ENCODE measurements at regions of chr12 and their contacts with region 1.

Region 1: DNA sequence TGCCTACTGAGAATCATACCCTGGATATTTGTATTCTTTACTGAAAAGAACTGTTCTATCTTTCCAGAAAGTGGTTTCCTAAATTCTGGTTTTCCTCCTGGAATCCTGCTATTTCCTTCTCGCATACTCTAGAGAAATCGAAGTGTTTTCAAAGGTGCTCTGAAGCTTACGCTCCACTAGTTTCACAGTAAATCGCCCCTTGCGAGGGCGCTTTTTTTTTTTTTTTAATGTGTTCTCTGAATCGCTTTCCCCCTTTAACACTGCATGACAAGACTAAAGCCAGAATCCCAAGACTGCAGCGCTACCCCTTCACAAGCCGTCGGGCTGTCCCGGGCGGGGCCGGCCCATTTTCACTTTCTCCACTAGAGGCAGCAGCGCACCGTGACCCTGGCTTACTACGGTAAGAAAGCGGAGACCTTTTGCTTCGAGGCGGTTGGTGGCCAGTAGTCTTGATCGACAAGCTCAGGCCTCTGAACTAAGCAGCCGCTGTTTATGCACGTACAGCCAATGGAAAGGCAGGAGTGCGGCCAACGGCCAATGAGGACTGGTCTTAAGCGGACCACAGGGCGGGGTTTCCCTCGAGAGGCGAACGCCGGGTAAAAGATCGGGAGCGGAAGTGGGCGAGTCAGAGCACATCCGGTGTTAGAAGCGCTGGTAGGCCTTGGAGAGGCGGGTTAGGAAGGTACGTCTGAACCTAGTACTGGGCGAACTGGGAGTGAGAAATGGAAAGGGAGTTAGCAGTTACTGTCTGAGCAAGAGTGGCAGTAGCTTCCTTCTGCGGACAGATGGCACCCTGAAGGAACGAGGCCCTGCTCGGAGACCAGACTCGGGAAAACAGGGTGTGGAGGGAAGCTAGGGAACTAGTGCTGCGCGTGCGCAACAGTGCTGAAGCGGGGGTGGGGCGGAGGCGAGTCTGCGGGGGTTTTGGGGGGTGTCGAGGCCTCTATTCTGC is at the start of gene TMBIM6:
- DNase-seq: peak; percentile 99
- H3K4me3 Mint-ChIP-seq: peak within 1 kb of the TSS; percentile 96
- H3K27ac Mint-ChIP-seq: peak within 1 kb of the TSS; percentile 100
- H3K4me1 Mint-ChIP-seq: peaks cover 37% of the 10 kb centered on the region
- H3K27me3 Mint-ChIP-seq: peaks cover 1% of the 10 kb centered on the region
- total RNA-seq, gene TMBIM6: 600 to 613 TPM

Region 2: DNA sequence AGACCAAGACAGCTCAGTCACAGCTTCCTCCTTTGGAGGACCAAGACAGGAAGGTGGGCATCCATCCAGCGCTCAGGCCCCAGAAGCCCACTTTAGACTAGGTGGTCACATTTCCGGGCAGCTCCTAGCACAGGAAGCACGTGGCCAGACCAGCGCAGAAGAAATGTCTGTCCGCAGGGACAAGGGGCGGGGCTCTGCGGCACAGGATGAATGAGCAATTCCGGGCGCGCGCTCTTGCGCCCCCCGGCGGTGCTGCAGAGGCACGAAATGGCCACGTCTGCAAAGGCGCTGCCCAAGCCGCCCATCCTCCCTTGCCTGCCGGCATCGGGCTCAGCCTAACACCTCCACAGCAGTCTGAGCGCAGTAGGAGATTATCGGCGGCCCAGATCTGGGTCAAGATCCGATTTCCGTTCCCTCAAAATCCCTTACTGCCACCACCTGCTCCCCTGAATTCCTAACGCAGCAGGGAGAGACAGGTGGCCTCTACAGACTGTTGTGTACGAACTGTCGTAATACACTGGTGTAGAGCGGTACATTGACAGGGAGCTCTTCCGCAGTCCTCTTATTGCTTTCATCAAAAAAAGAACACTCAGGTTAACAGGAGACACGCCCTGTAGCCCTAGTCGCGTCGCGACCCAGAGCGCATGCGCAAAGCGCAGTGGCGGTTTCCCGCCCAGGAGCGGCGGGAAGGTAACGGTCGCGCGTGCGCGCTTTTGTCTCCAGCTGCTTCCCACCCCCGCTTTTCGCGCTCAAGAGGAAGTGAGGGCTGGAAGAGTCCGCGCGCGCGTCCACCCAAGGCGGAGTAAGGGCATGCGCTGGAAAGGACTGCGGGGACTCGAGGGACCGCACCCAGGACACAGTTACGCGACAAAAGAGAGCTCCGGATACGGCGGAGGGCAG is 610.8 kb before region 1 on chr12:
- CTCF ChIA-PET with region 1: no interaction called
- POLR2A ChIA-PET with region 1: interaction called, 16 read pairs
- DNase-seq: peak; percentile 92
- H3K4me3 Mint-ChIP-seq: peak overlapping the region; percentile 96
- H3K27ac Mint-ChIP-seq: peak overlapping the region; percentile 97
- H3K4me1 Mint-ChIP-seq: peaks cover 54% of the 10 kb centered on the region
- H3K27me3 Mint-ChIP-seq: no peaks in the 10 kb centered on the region

Region 3: DNA sequence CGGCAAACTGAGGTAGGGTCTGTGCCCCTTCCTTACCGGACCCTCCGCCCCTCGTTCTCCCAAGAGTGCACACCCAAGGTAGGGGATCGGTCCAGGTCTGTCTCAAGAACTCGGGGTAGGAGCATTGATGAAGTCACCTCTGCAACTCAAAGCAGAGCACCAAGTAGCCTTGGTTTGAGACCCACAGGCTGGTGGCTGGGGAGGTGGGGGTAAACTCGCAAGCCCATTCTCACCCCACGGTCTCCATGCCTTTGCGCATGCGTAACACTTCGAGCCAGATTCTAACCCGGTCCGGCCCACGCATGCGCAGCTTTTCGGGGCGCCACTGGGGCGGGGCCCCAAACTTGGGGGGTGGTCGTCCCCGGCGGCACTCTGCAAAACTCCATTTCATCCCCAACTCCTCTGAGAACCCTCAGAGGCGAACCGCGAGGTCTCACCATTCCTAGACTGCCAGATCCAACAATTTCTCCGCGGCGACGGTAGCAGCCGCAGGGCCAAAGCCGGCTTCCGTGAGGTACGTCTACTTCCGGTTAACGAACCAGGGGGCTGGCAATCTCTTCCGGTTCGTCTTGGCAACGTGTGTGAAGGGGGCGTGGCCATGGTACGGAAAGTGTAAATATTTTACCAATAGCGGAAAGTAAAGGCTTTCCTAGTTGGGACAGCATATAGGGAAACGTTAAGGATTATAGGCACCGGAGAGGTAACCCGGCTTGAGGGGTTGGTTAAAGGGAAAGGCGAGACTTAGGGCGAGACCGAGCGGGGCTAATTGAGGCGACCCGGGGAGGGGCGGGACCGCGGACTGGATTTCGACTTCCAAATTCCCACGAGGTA is 173.4 kb before region 1 on chr12 and contains the start of gene MCRS1:
- CTCF ChIA-PET with region 1: interaction called, 11 read pairs
- POLR2A ChIA-PET with region 1: interaction called, 5 read pairs
- DNase-seq: peak; percentile 90
- H3K4me3 Mint-ChIP-seq: peak within 1 kb of the TSS; percentile 97
- H3K27ac Mint-ChIP-seq: peak within 1 kb of the TSS; percentile 89
- H3K4me1 Mint-ChIP-seq: peaks cover 65% of the 10 kb centered on the region
- H3K27me3 Mint-ChIP-seq: no peaks in the 10 kb centered on the region
- total RNA-seq, gene MCRS1: 70.5 to 73.1 TPM

Region 4: GRCh38 chr12:49644620-49644994 is 96.6 kb before region 1 on chr12:
- CTCF ChIA-PET with region 1: interaction called, 16 read pairs
- POLR2A ChIA-PET with region 1: interaction called, 7 read pairs
- DNase-seq: peak; percentile 83
- H3K4me3 Mint-ChIP-seq: no peak overlapping the region
- H3K27ac Mint-ChIP-seq: peak overlapping the region; percentile 67
- H3K4me1 Mint-ChIP-seq: peaks cover 24% of the 10 kb centered on the region
- H3K27me3 Mint-ChIP-seq: no peaks in the 10 kb centered on the region

Region 5: GRCh38 chr12:49707128-49707811 is 33.9 kb before region 1 on chr12 and contains the start of gene FMNL3:
- CTCF ChIA-PET with region 1: interaction called, 29 read pairs
- POLR2A ChIA-PET with region 1: interaction called, 24 read pairs
- DNase-seq: peak; percentile 98
- H3K4me3 Mint-ChIP-seq: peak within 1 kb of the TSS; percentile 88
- H3K27ac Mint-ChIP-seq: peak within 1 kb of the TSS; percentile 65
- H3K4me1 Mint-ChIP-seq: peaks cover 41% of the 10 kb centered on the region
- H3K27me3 Mint-ChIP-seq: peaks cover 26% of the 10 kb centered on the region
- total RNA-seq, gene FMNL3: 34.7 to 34.9 TPM

Region 6: GRCh38 chr12:49776413-49776812 is 35.2 kb after region 1 on chr12:
- CTCF ChIA-PET with region 1: interaction called, 48 read pairs
- POLR2A ChIA-PET with region 1: interaction called, 16 read pairs
- DNase-seq: peak; percentile 68
- H3K4me3 Mint-ChIP-seq: no peak overlapping the region
- H3K27ac Mint-ChIP-seq: no peak overlapping the region
- H3K4me1 Mint-ChIP-seq: peaks cover 17% of the 10 kb centered on the region
- H3K27me3 Mint-ChIP-seq: peaks cover 20% of the 10 kb centered on the region

Region 7: GRCh38 chr12:49945394-49946080 is 204.3 kb after region 1 on chr12:
- CTCF ChIA-PET with region 1: interaction called, 11 read pairs
- POLR2A ChIA-PET with region 1: interaction called, 7 read pairs
- DNase-seq: peak; percentile 89
- H3K4me3 Mint-ChIP-seq: peak overlapping the region; percentile 82
- H3K27ac Mint-ChIP-seq: peak overlapping the region; percentile 90
- H3K4me1 Mint-ChIP-seq: peaks cover 55% of the 10 kb centered on the region
- H3K27me3 Mint-ChIP-seq: peaks cover 4% of the 10 kb centered on the region

Measured in activated CD4-positive, alpha-beta memory T cell treated with anti-CD3 and anti-CD28 coated beads, Interleukin-2, amount 10 ng/mL, durations not matched to agents 7 days and 5 days (primary cell).